Naive thymus-derived CD4-positive, alpha-beta T cell (primary cell): ENCODE measurements at regions of chr3 and their contacts with region 1.

Region 1: DNA sequence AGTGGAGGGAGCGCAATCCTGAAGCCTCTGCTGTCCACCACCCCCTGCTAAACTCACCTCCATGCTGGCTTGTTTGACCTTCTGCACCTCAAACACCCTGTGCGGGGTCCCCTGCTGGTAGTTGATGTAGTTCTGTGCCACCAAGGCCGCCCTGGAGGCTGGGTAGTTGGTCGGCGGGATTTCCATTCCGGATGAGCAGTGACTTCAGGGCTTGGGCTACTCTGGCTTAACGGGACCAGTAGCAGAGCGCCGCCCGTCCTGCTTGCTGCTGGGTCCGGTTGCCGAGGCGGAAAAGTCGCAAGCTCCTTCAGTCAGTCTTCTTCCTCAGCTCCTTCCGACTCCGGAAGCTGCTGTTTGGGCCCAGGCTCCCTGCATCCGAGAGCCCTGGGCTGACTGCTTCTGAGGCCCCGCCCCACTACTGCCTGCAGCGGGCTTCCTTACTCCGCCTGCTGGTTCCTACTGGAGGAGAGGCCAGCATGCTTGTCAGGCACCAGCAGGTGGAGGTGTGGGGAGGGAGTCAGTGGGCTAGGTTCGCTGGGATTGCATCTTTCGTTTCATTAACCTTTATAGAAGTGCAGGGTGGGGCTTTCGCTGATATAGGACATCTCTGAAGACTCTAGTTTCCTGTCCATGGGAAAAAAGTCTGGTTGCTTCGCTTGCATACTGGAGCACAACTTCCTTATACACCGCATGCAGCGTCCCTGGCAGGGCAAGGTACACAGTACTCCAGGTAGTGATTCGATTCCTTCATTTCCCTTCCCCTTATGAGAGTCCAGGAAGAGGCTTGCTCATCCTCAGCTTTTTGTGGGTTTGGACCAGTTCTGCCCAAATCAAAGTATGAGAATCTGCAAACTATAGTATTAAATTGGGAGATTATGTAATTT is at the start of gene LXN:
- DNase-seq: peak; percentile 42 to 86 (median 74)
- ATAC-seq: peak; percentile 99
- H3K4me3 ChIP-seq: peak within 1 kb of the TSS; percentile 79
- H3K4me3 Mint-ChIP-seq: peak within 1 kb of the TSS; percentile 82 to 97 (median 92)
- H3K27ac ChIP-seq: peak within 1 kb of the TSS; percentile 71
- H3K27ac Mint-ChIP-seq: peak within 1 kb of the TSS; percentile 67 to 97 (median 91)
- H3K4me1 ChIP-seq: peaks cover 15 to 19% of the 10 kb centered on the region in 2 donors
- H3K4me1 Mint-ChIP-seq: peaks cover 13 to 40% (median 33%) of the 10 kb centered on the region in 7 donors
- H3K27me3 ChIP-seq: no peaks in the 10 kb centered on the region
- H3K27me3 Mint-ChIP-seq: no peaks in the 10 kb centered on the region
- total RNA-seq, gene LXN: 2.1 to 10.9 (median 6.0) TPM

Region 2: GRCh38 chr3:158330870-158331269 is 341.7 kb before region 1 on chr3:
- CTCF ChIA-PET with region 1: no interaction called
- POLR2A ChIA-PET with region 1: no interaction called
- intact Hi-C with region 1: no loop called
- DNase-seq: no peak
- ATAC-seq: no peak
- H3K4me3 ChIP-seq: no peak overlapping the region
- H3K4me3 Mint-ChIP-seq: no peak overlapping the region
- H3K27ac ChIP-seq: no peak overlapping the region
- H3K27ac Mint-ChIP-seq: no peak overlapping the region
- H3K4me1 ChIP-seq: no peaks in the 10 kb centered on the region
- H3K4me1 Mint-ChIP-seq: peaks cover 0 to 10% (median 7%) of the 10 kb centered on the region in 7 donors
- H3K27me3 ChIP-seq: no peaks in the 10 kb centered on the region
- H3K27me3 Mint-ChIP-seq: no peaks in the 10 kb centered on the region

Region 3: DNA sequence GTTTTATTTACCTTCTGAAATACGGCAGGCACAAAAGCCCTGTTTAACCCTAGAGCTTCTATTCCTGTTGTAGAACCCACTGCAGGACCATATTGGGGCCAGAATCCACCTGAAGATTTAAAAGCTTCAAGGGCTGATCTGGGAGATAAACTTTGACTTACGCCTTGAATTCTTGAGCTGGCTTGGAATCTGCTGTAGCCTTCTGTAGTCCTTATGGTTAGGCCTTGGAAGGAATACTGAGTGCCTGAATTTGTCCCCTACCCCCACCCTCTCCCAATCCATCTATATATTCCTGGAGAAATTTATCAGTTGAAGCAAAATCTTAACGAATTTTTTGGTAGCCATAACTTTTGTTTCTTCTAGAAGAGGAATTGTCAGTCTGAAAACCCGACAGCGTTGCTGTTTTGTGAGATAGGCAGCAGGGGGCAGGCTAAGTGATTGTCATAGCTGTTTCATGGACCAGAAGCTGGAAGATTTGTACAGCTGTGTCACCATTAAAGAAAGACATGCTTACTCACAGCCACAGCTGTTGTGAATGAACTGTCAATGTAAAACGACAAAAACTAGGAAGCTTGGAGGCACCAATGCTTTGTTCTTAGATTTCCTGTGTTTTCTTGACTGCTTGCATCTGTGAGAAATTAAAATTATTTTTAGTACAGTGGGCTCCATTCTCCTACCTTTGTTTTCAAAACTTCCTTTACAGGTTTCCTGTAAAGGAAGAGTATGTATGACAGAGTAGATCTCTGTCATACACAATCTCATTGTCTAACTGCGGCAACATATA is 12.9 kb before region 1 on chr3:
- CTCF ChIA-PET with region 1: interaction called, 9 read pairs
- POLR2A ChIA-PET with region 1: interaction called, 4 read pairs
- intact Hi-C with region 1: loop called (anchors 1 to 2 kb)
- DNase-seq: peak in 8 of 9 donors; percentile 23 to 57 (median 39)
- ATAC-seq: peak; percentile 92
- H3K4me3 ChIP-seq: no peak overlapping the region
- H3K4me3 Mint-ChIP-seq: no peak overlapping the region
- H3K27ac ChIP-seq: no peak overlapping the region
- H3K27ac Mint-ChIP-seq: peak overlapping the region in 4 of 9 donors; percentile 21 to 62 (median 30)
- H3K4me1 ChIP-seq: no peaks in the 10 kb centered on the region
- H3K4me1 Mint-ChIP-seq: peaks cover 0 to 17% (median 7%) of the 10 kb centered on the region in 7 donors
- H3K27me3 ChIP-seq: no peaks in the 10 kb centered on the region
- H3K27me3 Mint-ChIP-seq: no peaks in the 10 kb centered on the region

Region 4: DNA sequence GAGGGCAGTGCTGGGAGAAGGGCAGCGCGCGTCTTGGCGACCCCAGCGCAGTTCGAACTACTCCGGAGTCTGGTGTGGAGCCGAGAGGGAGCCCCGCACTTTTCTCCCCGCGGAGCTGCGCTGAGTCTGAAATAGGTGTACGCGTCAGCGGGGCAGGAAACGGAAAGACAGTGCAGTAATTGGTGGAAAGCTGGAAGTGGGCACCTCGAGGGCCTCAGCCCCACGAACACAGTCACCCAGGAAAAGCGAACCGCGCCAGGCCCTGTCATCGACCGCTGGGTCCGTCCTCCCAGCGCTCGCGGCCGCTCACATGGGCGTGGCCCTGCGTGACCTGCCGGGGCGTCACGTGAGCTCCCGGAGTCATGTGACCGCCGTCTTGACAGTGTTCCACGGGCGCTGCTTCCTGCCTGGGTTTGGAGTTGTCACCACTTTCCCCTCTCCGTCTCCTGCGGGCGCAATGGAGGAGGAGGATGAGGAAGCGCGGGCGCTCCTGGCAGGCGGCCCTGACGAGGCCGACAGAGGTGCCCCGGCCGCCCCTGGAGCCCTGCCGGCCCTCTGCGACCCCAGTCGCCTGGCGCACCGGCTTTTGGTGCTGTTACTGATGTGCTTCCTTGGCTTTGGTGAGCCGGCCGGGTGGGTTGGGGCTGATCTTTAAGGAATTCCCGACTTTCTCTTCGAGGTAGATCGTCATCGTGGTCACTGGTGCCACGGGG is 129.3 kb after region 1 on chr3 and contains the start of gene MFSD1:
- CTCF ChIA-PET with region 1: no interaction called
- POLR2A ChIA-PET with region 1: interaction called, 4 read pairs
- intact Hi-C with region 1: loop called (anchors 1 to 2 kb)
- DNase-seq: peak; percentile 73 to 91 (median 83)
- ATAC-seq: peak; percentile 94
- H3K4me3 ChIP-seq: peak within 1 kb of the TSS; percentile 88
- H3K4me3 Mint-ChIP-seq: peak within 1 kb of the TSS; percentile 84 to 93 (median 90)
- H3K27ac ChIP-seq: peak within 1 kb of the TSS; percentile 76
- H3K27ac Mint-ChIP-seq: peak within 1 kb of the TSS; percentile 58 to 98 (median 92)
- H3K4me1 ChIP-seq: peaks cover 9 to 11% of the 10 kb centered on the region in 2 donors
- H3K4me1 Mint-ChIP-seq: peaks cover 24 to 50% (median 43%) of the 10 kb centered on the region in 7 donors
- H3K27me3 ChIP-seq: no peaks in the 10 kb centered on the region
- H3K27me3 Mint-ChIP-seq: peaks cover 0 to 24% (median 0%) of the 10 kb centered on the region in 5 donors
- total RNA-seq, gene MFSD1: 24.6 to 66.0 (median 31.1) TPM